ENCODE measurements at regions of chr16 and their contacts with region 1.

Region 1: GRCh38 chr16:66275775-66276428 is 90.6 kb upstream of the CDH5 start:
- DNase-seq: peak in 3 of 4 experiments; percentile 34 to 45 (median 34)
- ATAC-seq: peak; percentile 46; the same call in 1 of the 3 replicates
- H3K4me3 ChIP-seq: no peak overlapping the region
- H3K27ac ChIP-seq: no peak overlapping the region
- H3K4me1 ChIP-seq: no peaks in the 10 kb centered on the region
- H3K27me3 ChIP-seq: no peaks in the 10 kb centered on the region
- CTCF ChIP-seq: peak; percentile 43 to 54 (median 53); a peak in 5 of 6 replicates
- EP300 ChIP-seq: no peak
- POLR2A ChIP-seq: no peak
- RAD21 ChIP-seq: peak in 1 of 2 experiments; percentile 40; a peak in 1 of 4 replicates

Region 2: GRCh38 chr16:65831903-65832666 is 443.8 kb before region 1 on chr16:
- CTCF ChIA-PET with region 1: no interaction called
- POLR2A ChIA-PET with region 1: no interaction called
- in situ Hi-C with region 1: no loop called
- intact Hi-C with region 1: no loop called
- DNase-seq: no peak
- ATAC-seq: peak; percentile 39; the same call in 2 of the 3 replicates
- H3K4me3 ChIP-seq: no peak overlapping the region
- H3K27ac ChIP-seq: no peak overlapping the region
- H3K4me1 ChIP-seq: peaks cover 0 to 2% of the 10 kb centered on the region in 2 experiments; a peak in 2 of 5 replicates
- H3K27me3 ChIP-seq: no peaks in the 10 kb centered on the region
- CTCF ChIP-seq: no peak
- EP300 ChIP-seq: no peak
- POLR2A ChIP-seq: no peak
- RAD21 ChIP-seq: no peak

Region 3: GRCh38 chr16:66255647-66256046 is 20.3 kb before region 1 on chr16:
- CTCF ChIA-PET with region 1: no interaction called
- POLR2A ChIA-PET with region 1: no interaction called
- in situ Hi-C with region 1: no loop called
- intact Hi-C with region 1: no loop called
- DNase-seq: no peak
- ATAC-seq: no peak
- H3K4me3 ChIP-seq: no peak overlapping the region
- H3K27ac ChIP-seq: no peak overlapping the region
- H3K4me1 ChIP-seq: no peaks in the 10 kb centered on the region
- H3K27me3 ChIP-seq: peaks cover 0 to 4% of the 10 kb centered on the region in 2 experiments; a peak in 1 of 5 replicates
- CTCF ChIP-seq: 0 out of 6 replicates have a peak, but pooled peaks of 1 of the 3 experiments have one; percentile 12
- EP300 ChIP-seq: no peak
- POLR2A ChIP-seq: no peak
- RAD21 ChIP-seq: 0 out of 4 replicates have a peak, but pooled peaks of 1 of the 2 experiments have one; percentile 3

Region 4: GRCh38 chr16:66315210-66315825 is 39.4 kb after region 1 on chr16:
- CTCF ChIA-PET with region 1: no interaction called
- POLR2A ChIA-PET with region 1: no interaction called
- in situ Hi-C with region 1: no loop called
- intact Hi-C with region 1: loop called (anchors 1 kb)
- DNase-seq: peak; percentile 74 to 81 (median 80)
- ATAC-seq: peak; percentile 99
- H3K4me3 ChIP-seq: no peak overlapping the region
- H3K27ac ChIP-seq: no peak overlapping the region
- H3K4me1 ChIP-seq: no peaks in the 10 kb centered on the region
- H3K27me3 ChIP-seq: peaks cover 3 to 20% of the 10 kb centered on the region in 2 experiments; a peak in 3 of 5 replicates
- CTCF ChIP-seq: peak; percentile 77 to 96 (median 92)
- EP300 ChIP-seq: no peak
- POLR2A ChIP-seq: no peak
- RAD21 ChIP-seq: peak; percentile 57 to 73

Region 5: DNA sequence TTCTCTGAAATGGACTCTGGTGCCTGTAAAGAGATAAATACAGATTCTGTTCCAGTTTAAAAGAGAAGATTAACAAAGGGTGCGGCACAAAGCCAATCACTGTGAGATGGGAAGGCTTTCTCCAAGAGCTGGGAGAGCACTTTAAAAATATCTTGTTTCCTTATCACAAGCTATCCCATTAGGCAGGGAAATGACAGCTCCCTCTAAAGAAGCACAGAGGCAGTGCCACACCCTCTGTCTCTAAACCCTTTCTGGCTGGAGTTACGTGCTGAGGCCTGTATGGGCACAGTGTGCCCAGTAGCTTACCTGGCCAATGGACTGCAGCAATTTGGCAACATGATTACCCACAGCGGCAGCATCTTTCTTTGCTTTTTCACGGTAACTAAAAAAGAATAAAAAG is 534.5 kb after region 1 on chr16:
- CTCF ChIA-PET with region 1: no interaction called
- POLR2A ChIA-PET with region 1: no interaction called
- in situ Hi-C with region 1: no loop called
- intact Hi-C with region 1: no loop called
- DNase-seq: no peak
- ATAC-seq: 0 out of 3 replicates have a peak, but pooled peaks have one; percentile 33
- H3K4me3 ChIP-seq: no peak overlapping the region
- H3K27ac ChIP-seq: no peak overlapping the region
- H3K4me1 ChIP-seq: no peaks in the 10 kb centered on the region
- H3K27me3 ChIP-seq: no peaks in the 10 kb centered on the region
- CTCF ChIP-seq: no peak
- EP300 ChIP-seq: no peak
- POLR2A ChIP-seq: no peak
- RAD21 ChIP-seq: no peak